ENCODE measurements at regions of chr10 and their contacts with region 1.

Region 1: GRCh38 chr10:75408911-75409885 is 7.6 kb upstream of the ZNF503 start:
- DNase-seq: peak; percentile 86
- H3K4me3 ChIP-seq: peak overlapping the region; percentile 54 to 79
- H3K27ac ChIP-seq: peak overlapping the region; percentile 98 to 99
- H3K4me1 ChIP-seq: peaks cover 9% of the 10 kb centered on the region
- H3K27me3 ChIP-seq: no peaks in the 10 kb centered on the region
- CTCF ChIP-seq: peak in 2 of 4 experiments; percentile 36 to 40
- POLR2A ChIP-seq: peak; percentile 43

Region 2: DNA sequence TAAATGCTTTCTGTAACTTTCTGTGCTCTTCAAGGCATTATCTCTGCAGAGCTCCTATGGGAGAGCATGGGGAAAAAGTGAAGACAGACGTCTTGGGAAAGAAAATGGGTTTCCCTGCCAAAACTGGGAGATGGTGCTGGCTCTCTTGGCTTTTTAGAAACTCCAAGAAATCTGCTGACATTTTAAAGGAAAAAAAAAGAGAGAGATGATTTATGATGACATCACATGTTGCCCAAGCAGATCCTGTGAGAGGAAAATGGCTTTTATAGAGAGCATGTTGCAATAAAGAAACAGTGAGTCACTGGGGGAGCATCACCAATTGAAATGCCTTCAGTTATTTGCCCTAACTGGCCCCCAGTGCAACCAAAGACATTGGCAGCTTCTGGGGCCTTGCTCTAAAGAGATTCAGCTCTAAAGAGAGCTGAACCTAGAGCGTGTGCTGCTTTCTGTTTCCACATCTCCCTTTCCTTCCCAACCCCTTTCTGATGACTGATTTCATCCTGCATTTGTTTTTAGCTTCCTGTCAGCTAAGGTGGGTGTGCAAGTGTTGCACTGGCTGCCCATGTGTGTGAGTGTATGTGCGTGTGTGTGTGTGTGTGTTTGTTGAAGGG is 59.9 kb after region 1 on chr10:
- intact Hi-C with region 1: loop called (anchors 5 kb)
- DNase-seq: peak; percentile 73
- H3K4me3 ChIP-seq: no peak overlapping the region
- H3K27ac ChIP-seq: peak overlapping the region in 1 of 2 donors; percentile 23
- H3K4me1 ChIP-seq: no peaks in the 10 kb centered on the region
- H3K27me3 ChIP-seq: no peaks in the 10 kb centered on the region
- CTCF ChIP-seq: no peak
- POLR2A ChIP-seq: no peak

Region 3: GRCh38 chr10:75682649-75683557 is 273.7 kb after region 1 on chr10:
- intact Hi-C with region 1: no loop called
- DNase-seq: peak; percentile 59
- H3K4me3 ChIP-seq: no peak overlapping the region
- H3K27ac ChIP-seq: peak overlapping the region in 1 of 2 donors; percentile 10
- H3K4me1 ChIP-seq: peaks cover 6% of the 10 kb centered on the region
- H3K27me3 ChIP-seq: no peaks in the 10 kb centered on the region
- CTCF ChIP-seq: no peak
- POLR2A ChIP-seq: no peak

Measured in prostate gland (tissue), 2 donors.